CD8-positive, alpha-beta T cell (primary cell): ENCODE measurements at regions of chr13 and their contacts with region 1.

Region 1: GRCh38 chr13:63249411-63250187 is 1834.0 kb upstream of the PCDH20 start:
- DNase-seq: no peak
- ATAC-seq: no peak
- H3K4me3 ChIP-seq: no peak overlapping the region
- H3K4me3 Mint-ChIP-seq: no peak overlapping the region
- H3K27ac ChIP-seq: no peak overlapping the region
- H3K27ac Mint-ChIP-seq: no peak overlapping the region
- H3K4me1 ChIP-seq: no peaks in the 10 kb centered on the region
- H3K4me1 Mint-ChIP-seq: no peaks in the 10 kb centered on the region
- H3K27me3 ChIP-seq: no peaks in the 10 kb centered on the region
- H3K27me3 Mint-ChIP-seq: no peaks in the 10 kb centered on the region
- CTCF ChIP-seq: no peak

Region 2: GRCh38 chr13:61664801-61665705 is 1584.5 kb before region 1 on chr13:
- CTCF ChIA-PET with region 1: no interaction called
- POLR2A ChIA-PET with region 1: no interaction called
- intact Hi-C with region 1: loop called in 1 of 2 experiments (anchors 5 kb)
- DNase-seq: no peak
- ATAC-seq: no peak
- H3K4me3 ChIP-seq: no peak overlapping the region
- H3K4me3 Mint-ChIP-seq: no peak overlapping the region
- H3K27ac ChIP-seq: no peak overlapping the region
- H3K27ac Mint-ChIP-seq: no peak overlapping the region
- H3K4me1 ChIP-seq: no peaks in the 10 kb centered on the region
- H3K4me1 Mint-ChIP-seq: no peaks in the 10 kb centered on the region
- H3K27me3 ChIP-seq: no peaks in the 10 kb centered on the region
- H3K27me3 Mint-ChIP-seq: no peaks in the 10 kb centered on the region
- CTCF ChIP-seq: no peak

Region 3: GRCh38 chr13:62524498-62524897 is 725.1 kb before region 1 on chr13:
- CTCF ChIA-PET with region 1: no interaction called
- POLR2A ChIA-PET with region 1: no interaction called
- intact Hi-C with region 1: no loop called
- DNase-seq: no peak
- ATAC-seq: no peak
- H3K4me3 ChIP-seq: no peak overlapping the region
- H3K4me3 Mint-ChIP-seq: no peak overlapping the region
- H3K27ac ChIP-seq: no peak overlapping the region
- H3K27ac Mint-ChIP-seq: no peak overlapping the region
- H3K4me1 ChIP-seq: no peaks in the 10 kb centered on the region
- H3K4me1 Mint-ChIP-seq: no peaks in the 10 kb centered on the region
- H3K27me3 ChIP-seq: no peaks in the 10 kb centered on the region
- H3K27me3 Mint-ChIP-seq: no peaks in the 10 kb centered on the region
- CTCF ChIP-seq: no peak